Cardiac septum (tissue), 1 donor: ENCODE measurements at regions of chr4 and their contacts with region 1.

Region 1: DNA sequence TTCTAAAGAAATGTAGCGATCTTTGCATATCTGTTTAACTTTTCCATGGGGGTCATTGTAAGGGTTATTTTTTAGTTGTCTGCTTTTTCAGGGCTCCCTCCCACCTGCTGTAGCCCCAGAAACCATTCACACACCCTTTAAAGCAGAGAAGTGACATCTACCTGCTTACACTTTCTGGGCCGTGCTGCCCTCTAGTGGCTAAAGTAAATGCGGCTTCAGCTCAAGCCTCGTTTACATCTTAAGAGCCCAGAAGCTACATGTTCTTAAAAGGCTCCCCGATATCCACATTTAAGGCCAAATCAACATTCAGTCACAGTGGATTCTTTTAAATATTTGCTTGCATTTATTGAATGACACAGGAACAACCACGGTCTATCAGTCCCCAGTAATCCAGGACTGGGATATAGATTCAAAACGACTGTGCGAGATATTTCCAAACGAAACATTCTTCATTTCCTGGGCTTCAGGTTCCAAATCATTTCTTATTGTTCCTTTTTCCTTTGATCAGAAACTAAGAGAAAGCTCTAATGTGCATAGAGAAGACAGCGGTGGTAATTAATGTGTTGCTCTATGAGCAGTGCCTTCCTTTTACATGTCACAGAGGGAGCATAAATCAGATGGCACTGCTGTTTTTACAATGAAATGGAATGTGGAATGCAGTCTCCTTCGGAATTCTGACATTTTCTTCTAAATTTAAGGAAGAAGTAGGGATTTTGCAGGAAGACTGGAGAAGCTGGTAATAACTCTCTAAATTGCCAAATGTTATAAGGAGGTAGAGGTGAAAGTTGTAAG is 119.9 kb downstream of the RASGEF1B start:
- DNase-seq: no peak

Region 2: GRCh38 chr4:81069706-81070331 is 282.0 kb before region 1 on chr4:
- intact Hi-C with region 1: loop called (anchors 5 kb)
- DNase-seq: no peak

Region 3: DNA sequence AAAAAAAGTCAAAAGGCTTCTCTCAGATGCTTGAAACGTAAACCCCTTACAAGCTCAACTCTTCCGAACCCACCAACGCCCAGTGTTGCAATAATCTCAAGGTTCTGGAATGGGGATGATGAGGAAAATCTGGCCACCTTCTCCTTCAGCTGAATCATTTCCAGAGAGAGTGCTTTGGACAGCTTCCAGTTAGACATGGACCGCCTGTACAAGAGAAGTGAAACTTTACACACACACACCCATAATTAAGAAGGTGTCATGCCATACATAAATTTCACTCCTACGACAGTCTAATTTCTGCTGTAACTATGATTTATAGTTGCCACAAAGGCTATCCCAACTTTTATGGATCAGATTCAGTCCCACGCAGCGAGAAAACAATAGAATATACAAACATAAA is 209.1 kb before region 1 on chr4:
- intact Hi-C with region 1: no loop called
- DNase-seq: no peak

Region 4: DNA sequence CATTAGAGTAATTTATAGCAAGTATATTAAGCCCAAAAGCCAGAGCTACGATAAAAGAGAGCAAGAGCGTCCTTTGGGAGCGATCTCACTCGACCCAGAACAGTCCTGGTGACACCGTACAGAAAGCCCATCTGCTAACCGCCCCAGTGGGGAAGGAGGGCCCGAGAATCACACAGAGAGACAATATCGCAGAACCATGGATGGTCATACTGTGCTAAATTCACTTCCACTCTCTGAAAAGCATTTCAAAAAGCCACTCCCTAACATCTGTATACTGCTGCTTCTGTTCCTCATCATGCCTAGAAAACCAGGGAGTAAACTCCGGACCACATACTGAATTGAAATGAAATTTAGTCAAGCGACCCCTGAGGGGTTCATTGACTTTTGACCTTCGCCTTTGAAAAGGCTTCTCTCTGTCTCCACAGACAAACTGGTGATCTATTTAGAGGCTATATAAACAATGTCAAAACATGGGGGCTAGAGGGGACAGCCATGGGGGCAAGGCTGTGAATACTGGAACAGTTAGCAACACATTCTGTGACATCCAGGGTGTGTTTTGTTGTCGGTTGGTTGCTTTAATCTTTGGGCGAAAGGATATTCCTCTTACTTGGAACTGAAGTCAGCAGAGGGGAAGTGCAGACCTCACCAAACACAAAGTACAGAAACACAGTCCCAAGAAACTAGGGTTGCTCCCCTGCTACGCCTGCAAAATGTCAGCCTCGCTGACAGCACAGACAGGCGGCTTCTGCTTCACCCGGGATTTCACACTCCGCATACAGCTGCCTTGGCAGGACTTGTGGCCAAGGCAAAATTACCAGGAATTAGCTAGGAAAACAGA is 248.9 kb after region 1 on chr4:
- intact Hi-C with region 1: no loop called
- DNase-seq: peak; percentile 78